ENCODE measurements at regions of chr17 and their contacts with region 1.

Region 1: DNA sequence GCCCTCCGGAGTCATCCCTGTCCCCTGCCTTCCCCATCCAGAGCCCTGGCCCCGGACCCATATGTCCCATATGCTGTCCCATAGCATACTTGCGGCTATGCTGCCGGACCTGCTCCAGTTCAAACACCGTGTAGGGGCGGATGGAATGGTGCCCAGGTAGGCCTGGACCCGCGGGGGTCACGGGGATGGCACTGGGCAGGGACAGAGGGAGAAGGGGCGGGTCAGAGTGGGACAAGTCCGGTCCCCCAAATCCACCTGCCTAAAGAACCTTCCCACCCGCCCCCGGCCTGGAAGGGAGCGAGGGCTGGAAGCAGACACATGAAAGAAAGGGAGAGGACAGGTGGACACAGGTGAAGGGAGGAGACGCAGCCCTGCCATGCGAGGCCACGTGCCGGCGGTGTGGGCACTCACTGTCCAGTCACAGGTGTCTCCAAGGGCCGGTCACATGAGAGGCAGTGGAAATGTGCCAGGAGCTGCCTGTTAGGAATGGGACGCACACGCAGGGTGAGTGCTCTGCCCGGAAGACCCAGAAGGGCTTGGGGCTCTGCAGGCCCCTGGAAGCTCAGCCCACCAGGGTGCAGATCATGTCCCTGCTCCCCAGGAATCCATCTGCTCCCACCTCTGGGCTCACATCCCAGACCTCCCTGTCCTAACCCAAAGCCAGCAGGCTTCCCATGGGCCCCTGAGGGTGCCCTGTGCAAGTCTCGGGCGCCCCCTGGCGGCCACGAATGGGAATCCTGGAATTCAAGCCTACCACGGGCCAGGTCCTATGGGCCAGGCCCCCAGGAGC is 14.0 kb downstream of the UBALD2 start:
- DNase-seq: peak; percentile 88 to 94 (median 91)
- ATAC-seq: peak; percentile 92
- H3K4me3 ChIP-seq: no peak overlapping the region
- H3K4me1 ChIP-seq: peaks cover 9% of the 10 kb centered on the region
- CTCF ChIP-seq: peak; percentile 81

Region 2: DNA sequence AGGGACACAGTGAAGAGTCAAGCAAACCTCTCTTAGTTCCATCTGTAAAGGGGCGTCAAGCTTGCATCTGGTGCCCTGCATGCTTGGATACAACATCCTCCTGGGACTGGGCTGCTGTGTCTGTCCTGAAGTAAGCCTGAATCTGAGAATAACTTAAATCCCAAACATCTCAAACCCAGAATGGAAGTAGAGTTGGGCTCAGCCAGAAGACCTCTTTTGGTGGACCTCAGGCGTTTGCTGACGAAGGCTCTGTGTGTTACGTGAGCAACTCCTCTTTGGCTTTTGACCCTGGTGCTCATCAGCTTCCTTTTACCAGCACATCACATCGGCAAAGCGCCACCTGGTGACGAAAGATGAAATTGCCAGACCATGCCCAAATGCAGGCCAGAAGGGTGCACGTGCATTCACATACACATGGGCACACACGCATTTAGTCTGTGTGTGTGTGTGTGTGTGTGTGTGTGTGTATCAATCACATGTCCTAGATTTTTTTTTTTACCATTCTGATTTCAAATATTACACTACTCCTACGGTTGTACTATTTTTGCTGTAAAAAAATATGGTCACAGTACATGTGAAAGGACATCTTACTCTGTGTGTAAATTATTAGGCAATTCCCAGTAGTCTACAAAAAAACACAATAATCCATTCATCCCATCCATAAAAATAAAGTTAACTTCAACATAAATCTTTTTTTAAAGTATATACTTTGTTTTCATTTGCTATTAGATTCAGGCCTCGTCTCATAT is 97.0 kb before region 1 on chr17:
- intact Hi-C with region 1: loop called in 1 of 2 experiments (anchors 10 kb)
- DNase-seq: peak; percentile 88 to 98 (median 95)
- ATAC-seq: peak; percentile 97
- H3K4me3 ChIP-seq: no peak overlapping the region
- H3K4me1 ChIP-seq: no peaks in the 10 kb centered on the region
- CTCF ChIP-seq: peak; percentile 77

Region 3: GRCh38 chr17:76370261-76370993 is 91.3 kb after region 1 on chr17:
- intact Hi-C with region 1: no loop called
- DNase-seq: peak in 1 of 3 donors; percentile 53
- ATAC-seq: peak; percentile 48
- H3K4me3 ChIP-seq: no peak overlapping the region
- H3K4me1 ChIP-seq: peaks cover 2% of the 10 kb centered on the region
- CTCF ChIP-seq: no peak

Measured in mucosa of descending colon (tissue), 3 donors.